ENCODE measurements at regions of chr11 and their contacts with region 1.

Region 1: GRCh38 chr11:125062931-125063428 is at the start of gene SLC37A2:
- DNase-seq: peak; percentile 68 to 74
- H3K4me3 ChIP-seq: peak within 1 kb of the TSS; percentile 73
- H3K27ac ChIP-seq: peak within 1 kb of the TSS; percentile 36
- H3K4me1 ChIP-seq: peaks cover 10% of the 10 kb centered on the region; the same call in 1 of the 2 replicates
- H3K27me3 ChIP-seq: no peaks in the 10 kb centered on the region
- CTCF ChIP-seq: no peak; the same call in 1 of the 2 replicates
- total RNA-seq, gene SLC37A2: 14.6 and 24.0 TPM in 2 replicates

Region 2: DNA sequence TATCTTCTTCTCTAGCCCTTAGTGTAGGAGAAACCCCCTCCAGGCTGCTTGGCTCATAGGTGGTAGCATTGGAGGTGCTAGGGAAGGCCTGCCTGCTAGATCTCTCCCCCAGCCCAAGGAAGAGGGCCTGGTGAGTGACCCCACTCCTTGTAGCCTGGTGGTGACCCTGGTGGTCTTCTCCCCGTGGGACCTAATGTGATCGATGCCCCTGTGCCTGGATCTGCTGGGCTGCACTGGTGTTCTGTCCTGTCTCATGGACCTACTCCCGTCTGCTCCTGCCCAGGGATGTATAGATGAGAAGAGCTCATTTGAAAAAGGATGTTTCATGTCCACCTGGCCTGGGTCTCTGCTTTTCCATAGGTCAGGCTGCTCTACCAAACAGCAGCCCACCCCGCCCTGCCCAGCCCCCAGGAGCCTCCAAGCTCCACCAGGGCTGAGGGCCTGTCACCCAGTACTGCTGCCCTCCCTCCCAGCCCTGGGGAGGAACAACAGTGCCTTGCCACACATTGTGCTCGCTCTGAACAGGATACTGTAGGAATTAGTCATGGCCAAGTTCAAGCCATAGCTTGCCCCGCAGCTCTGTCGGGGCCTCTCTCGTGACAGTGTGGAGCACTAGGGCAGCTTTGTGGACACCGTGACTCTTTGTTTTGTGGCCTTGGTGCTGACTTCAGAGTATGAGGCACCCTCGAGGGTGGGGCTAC is 19.8 kb after region 1 on chr11:
- CTCF ChIA-PET with region 1: no interaction called
- POLR2A ChIA-PET with region 1: interaction called, 5 read pairs
- intact Hi-C with region 1: loop called (anchors 2 kb)
- DNase-seq: peak; percentile 83 to 94
- H3K4me3 ChIP-seq: no peak overlapping the region
- H3K27ac ChIP-seq: peak overlapping the region; percentile 80
- H3K4me1 ChIP-seq: peaks cover 72% of the 10 kb centered on the region
- H3K27me3 ChIP-seq: no peaks in the 10 kb centered on the region
- CTCF ChIP-seq: no peak

Region 3: GRCh38 chr11:125123947-125124617 is 61.1 kb after region 1 on chr11:
- CTCF ChIA-PET with region 1: interaction called, 3 read pairs
- POLR2A ChIA-PET with region 1: no interaction called
- intact Hi-C with region 1: loop called (anchors 2 kb)
- DNase-seq: peak; percentile 45 to 72
- H3K4me3 ChIP-seq: peak overlapping the region; percentile 57
- H3K27ac ChIP-seq: peak overlapping the region; percentile 57
- H3K4me1 ChIP-seq: peaks cover 14% of the 10 kb centered on the region
- H3K27me3 ChIP-seq: no peaks in the 10 kb centered on the region
- CTCF ChIP-seq: peak; percentile 80

Region 4: GRCh38 chr11:125201525-125202141 is 138.7 kb after region 1 on chr11:
- CTCF ChIA-PET with region 1: no interaction called
- POLR2A ChIA-PET with region 1: no interaction called
- intact Hi-C with region 1: no loop called
- DNase-seq: peak in 1 of 2 experiments; percentile 57
- H3K4me3 ChIP-seq: no peak overlapping the region
- H3K27ac ChIP-seq: no peak overlapping the region
- H3K4me1 ChIP-seq: no peaks in the 10 kb centered on the region
- H3K27me3 ChIP-seq: peaks cover 8% of the 10 kb centered on the region; the same call in 1 of the 2 replicates
- CTCF ChIP-seq: no peak

Region 5: GRCh38 chr11:125429166-125429707 is 366.3 kb after region 1 on chr11:
- CTCF ChIA-PET with region 1: no interaction called
- POLR2A ChIA-PET with region 1: no interaction called
- intact Hi-C with region 1: no loop called
- DNase-seq: peak; percentile 49 to 50
- H3K4me3 ChIP-seq: no peak overlapping the region
- H3K27ac ChIP-seq: no peak overlapping the region
- H3K4me1 ChIP-seq: no peaks in the 10 kb centered on the region
- H3K27me3 ChIP-seq: peaks cover 30% of the 10 kb centered on the region
- CTCF ChIP-seq: peak; percentile 73

Measured in PC-9 (cell line).